CD8-positive, alpha-beta T cell (primary cell): ENCODE measurements at regions of chr9 and their contacts with region 1.

Region 1: GRCh38 chr9:92133949-92134604 is 18.9 kb upstream of the SPTLC1 start:
- DNase-seq: peak; percentile 39 to 83 (median 74)
- ATAC-seq: peak; percentile 83
- H3K4me3 ChIP-seq: no peak overlapping the region
- H3K4me3 Mint-ChIP-seq: peak overlapping the region; percentile 35
- H3K27ac ChIP-seq: no peak overlapping the region
- H3K27ac Mint-ChIP-seq: no peak overlapping the region
- H3K4me1 ChIP-seq: peaks cover 7% of the 10 kb centered on the region
- H3K4me1 Mint-ChIP-seq: peaks cover 20% of the 10 kb centered on the region
- H3K27me3 ChIP-seq: no peaks in the 10 kb centered on the region
- H3K27me3 Mint-ChIP-seq: peaks cover 33% of the 10 kb centered on the region
- CTCF ChIP-seq: peak; percentile 84

Region 2: GRCh38 chr9:92634712-92635605 is 500.9 kb after region 1 on chr9:
- CTCF ChIA-PET with region 1: interaction called, 30 read pairs
- POLR2A ChIA-PET with region 1: no interaction called
- intact Hi-C with region 1: loop called (anchors 1 kb)
- DNase-seq: peak; percentile 31 to 71 (median 54)
- ATAC-seq: peak; percentile 71
- H3K4me3 ChIP-seq: no peak overlapping the region
- H3K4me3 Mint-ChIP-seq: no peak overlapping the region
- H3K27ac ChIP-seq: no peak overlapping the region
- H3K27ac Mint-ChIP-seq: no peak overlapping the region
- H3K4me1 ChIP-seq: no peaks in the 10 kb centered on the region
- H3K4me1 Mint-ChIP-seq: peaks cover 2% of the 10 kb centered on the region
- H3K27me3 ChIP-seq: no peaks in the 10 kb centered on the region
- H3K27me3 Mint-ChIP-seq: no peaks in the 10 kb centered on the region
- CTCF ChIP-seq: peak; percentile 61

Region 3: DNA sequence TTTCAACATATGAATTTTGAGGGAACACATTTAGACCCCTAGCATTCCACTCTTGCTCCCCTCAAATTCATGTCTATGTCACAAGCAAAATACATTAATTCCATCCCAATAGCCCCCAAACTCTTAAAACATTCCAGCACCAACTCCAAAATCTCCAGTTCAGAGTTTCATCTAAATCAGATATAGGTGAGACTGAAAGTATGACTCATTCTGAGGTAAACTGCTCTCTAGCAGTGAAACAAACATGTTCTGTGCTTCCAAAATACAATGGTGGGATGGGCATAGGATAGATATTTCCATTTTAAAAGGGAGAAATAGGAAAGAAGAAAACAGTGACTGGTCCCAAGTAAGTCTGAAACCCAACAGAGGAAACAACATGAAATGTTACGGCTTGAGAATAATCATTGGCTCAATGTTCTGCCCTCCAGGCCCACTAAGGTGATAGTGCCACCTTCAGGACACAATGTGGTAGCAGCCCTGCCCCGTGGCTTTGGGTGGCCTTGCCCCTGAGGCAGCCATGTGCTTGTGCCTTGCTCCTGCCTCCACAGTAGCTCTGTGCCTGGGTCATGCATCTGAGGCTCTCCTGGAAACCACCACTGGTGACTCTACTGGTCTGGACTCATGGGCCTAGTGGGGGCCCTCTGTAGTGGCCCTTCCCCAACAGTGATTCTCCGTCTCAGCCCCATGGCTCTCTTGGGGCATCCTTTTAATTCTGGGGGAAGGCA is 572.3 kb after region 1 on chr9:
- CTCF ChIA-PET with region 1: interaction called, 3 read pairs
- POLR2A ChIA-PET with region 1: no interaction called
- intact Hi-C with region 1: loop called in 1 of 2 experiments (anchors 2 kb)
- DNase-seq: peak in 4 of 9 experiments; percentile 35 to 64 (median 50)
- ATAC-seq: peak; percentile 86
- H3K4me3 ChIP-seq: no peak overlapping the region
- H3K4me3 Mint-ChIP-seq: no peak overlapping the region
- H3K27ac ChIP-seq: no peak overlapping the region
- H3K27ac Mint-ChIP-seq: no peak overlapping the region
- H3K4me1 ChIP-seq: peaks cover 4% of the 10 kb centered on the region
- H3K4me1 Mint-ChIP-seq: peaks cover 9% of the 10 kb centered on the region
- H3K27me3 ChIP-seq: no peaks in the 10 kb centered on the region
- H3K27me3 Mint-ChIP-seq: no peaks in the 10 kb centered on the region
- CTCF ChIP-seq: peak; percentile 35